GM13976 (cell line): ENCODE measurements at regions of chr14 and their contacts with region 1.

Region 1: GRCh38 chr14:70013269-70013873 is 134.2 kb downstream of the SMOC1 start:
- DNase-seq: peak; percentile 66
- CTCF ChIP-seq: peak; percentile 61

Region 2: GRCh38 chr14:69580009-69580577 is 433.3 kb before region 1 on chr14:
- in situ Hi-C with region 1: loop called (anchors 25 kb)
- DNase-seq: no peak
- CTCF ChIP-seq: no peak

Region 3: DNA sequence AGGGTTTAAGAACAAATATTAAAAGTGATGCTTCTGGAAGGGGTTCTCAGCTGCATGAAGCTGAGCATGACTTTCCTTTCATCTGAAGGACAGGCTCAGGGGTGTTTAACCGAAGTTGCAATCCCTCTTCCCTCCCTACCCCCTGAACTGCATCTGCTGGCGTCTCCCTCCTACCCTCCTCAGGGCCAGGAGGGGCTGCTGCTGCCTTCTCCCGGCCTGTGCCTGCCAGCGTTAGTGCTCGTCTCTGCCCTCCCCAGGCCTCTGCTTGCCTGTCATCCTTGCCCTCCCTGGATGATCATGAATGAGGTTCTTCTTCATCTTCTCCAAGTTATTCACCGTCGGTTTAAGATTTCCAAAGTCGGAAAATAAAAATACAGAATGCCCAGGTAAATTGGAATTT is 121.9 kb before region 1 on chr14:
- in situ Hi-C with region 1: no loop called
- DNase-seq: no peak
- CTCF ChIP-seq: no peak